AG04449 (cell line): ENCODE measurements at regions of chr6 and their contacts with region 1.

Region 1: GRCh38 chr6:7541175-7542064 is at the start of gene DSP:
- DNase-seq: no peak
- H3K4me3 ChIP-seq: peak within 1 kb of the TSS; percentile 82
- CTCF ChIP-seq: no peak

Region 2: GRCh38 chr6:7528565-7528964 is 12.9 kb before region 1 on chr6:
- CTCF ChIA-PET with region 1: interaction called, 4 read pairs
- POLR2A ChIA-PET with region 1: interaction called, 10 read pairs
- DNase-seq: peak; percentile 89
- H3K4me3 ChIP-seq: no peak overlapping the region
- CTCF ChIP-seq: no peak